ENCODE measurements at regions of chr19 and their contacts with region 1.

Region 1: DNA sequence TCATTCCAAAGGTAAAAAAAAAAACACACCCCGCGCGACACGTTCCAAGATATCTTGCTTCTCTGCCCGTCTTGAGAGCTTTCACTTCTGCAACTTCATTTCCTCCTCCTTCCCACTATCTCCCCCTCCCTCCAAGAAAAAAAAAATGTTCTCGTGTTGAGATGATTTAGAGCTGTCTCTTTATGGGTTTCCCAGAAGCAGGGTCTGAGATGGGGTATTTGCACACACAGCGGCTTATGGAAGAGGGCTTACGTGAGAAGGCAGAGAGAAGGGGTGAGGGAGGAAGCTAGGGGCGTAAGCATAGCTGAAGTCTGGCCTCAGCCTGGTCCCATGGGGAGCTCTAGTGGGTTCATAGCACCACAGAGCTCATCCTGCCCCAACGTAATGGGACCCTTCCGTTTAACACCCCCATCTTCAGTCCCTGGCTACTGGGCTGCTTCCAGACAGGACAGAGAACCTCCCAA is 31.3 kb upstream of the USE1 start:
- DNase-seq: no peak
- H3K4me3 ChIP-seq: no peak overlapping the region
- CTCF ChIP-seq: no peak

Region 2: GRCh38 chr19:17156927-17157302 is 27.0 kb before region 1 on chr19:
- CTCF ChIA-PET with region 1: no interaction called
- POLR2A ChIA-PET with region 1: no interaction called
- DNase-seq: no peak
- H3K4me3 ChIP-seq: no peak overlapping the region
- CTCF ChIP-seq: no peak

Region 3: DNA sequence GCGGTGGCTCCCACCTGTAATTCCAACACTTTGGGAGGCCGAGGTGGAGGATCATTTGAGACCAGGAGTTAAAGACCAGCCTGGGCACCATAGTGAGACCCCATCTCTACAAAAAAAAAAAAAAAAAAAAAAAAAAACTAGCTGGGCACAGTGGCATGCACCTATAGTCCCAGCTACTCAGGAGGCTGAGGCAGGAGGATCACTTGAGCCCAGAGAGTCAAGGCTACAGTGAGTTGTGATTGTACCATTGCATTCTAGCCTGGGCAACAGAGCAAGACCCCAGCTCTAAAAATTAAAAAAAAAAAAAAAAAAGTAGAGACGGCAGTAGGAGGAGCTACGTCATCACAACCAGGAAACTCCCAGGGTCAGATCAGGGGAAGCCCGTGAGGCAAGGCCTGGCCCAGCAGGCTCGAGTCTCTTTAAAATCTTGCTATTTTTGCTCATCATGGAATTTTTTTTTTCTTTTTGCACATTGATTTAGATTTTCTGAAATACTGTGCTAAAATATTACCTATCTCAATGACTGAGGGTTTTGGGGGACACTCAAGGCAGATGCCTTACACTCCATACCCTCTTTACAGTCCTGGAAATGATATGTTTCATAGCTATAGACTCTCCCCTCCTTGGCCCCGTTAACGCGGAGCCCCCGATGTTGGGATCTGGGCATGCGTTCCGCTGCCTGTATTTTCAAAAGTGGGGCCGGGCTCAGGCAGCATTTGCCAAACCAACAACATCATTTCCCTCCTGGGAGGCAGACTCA is 13.2 kb before region 1 on chr19:
- CTCF ChIA-PET with region 1: interaction called, 10 read pairs
- POLR2A ChIA-PET with region 1: no interaction called
- DNase-seq: no peak
- H3K4me3 ChIP-seq: no peak overlapping the region
- CTCF ChIP-seq: no peak

Measured in AG04449 (cell line).